Posterior vena cava (tissue), 2 donors: ENCODE measurements at regions of chrX and their contacts with region 1.

Region 1: DNA sequence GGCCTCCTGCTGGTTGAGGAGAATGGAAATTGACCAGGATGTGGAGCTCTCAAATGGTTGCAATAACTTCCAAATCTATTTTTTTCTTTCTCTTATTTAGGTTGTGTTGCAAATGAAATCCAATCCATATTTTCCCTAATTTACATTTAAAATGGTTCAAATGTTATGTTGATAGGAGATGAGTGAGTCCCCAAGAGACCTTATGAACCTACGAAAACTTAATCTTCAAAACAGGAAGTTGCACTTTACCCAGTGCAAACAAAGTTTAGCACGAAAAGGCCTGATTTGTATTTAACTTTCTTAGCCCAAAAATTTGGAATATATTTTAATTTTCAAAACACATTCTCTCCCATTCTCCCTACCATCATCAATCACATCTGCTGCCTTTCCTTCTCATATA is 59.3 kb upstream of the NDP start:
- DNase-seq: no peak

Region 2: DNA sequence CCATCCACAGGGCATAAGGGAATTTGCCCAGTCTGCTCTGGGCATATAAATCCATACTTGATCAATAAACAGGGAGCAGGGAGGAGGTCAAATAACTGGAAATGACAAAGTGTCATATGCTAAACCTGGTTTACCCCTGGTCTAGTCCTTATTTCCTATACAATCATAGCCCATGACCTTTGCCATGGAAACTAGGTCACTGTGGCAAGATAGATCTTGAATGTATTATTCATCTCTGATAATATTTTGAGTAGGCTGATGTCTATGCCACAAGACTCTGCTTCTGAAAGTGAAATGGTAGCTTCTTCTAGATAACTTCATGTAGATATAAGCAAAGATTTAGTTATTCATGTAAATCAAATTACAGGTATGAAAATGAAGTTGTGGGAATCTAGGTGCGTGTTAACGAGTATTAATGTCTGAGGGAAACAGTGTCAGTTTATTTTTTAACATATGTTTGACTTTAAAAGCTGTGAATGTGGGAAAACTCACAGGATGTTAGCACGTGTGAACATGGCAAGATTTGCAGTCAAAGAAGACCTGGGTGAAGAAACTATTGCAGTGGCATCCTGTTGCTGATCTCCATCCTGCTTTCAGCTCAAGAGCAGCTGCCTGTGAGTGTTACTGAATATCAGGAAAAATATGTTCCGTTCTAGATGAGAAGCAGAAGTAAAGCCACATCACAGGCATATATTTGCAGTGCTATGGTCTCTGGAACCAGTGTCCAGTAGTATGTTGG is 22.6 kb after region 1 on chrX:
- intact Hi-C with region 1: no loop called
- DNase-seq: no peak

Region 3: DNA sequence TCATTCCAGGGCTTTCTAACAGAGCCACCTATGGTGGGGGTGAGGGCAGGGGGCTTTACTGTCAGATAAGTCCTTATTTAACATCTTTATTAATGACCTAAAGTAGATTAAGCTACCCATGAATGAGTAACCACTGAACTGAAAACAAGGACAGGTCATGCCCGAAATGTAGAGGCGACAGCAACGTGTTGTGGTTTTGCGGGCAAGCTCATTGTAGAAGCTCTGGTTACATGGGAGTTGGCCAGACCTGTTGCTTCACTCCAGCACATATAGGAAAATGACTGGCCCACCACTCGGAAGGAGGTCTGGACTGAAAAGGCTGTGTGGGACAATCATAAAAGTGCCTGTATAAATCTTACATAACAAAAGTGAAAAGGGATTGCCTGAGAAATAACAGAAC is 50.4 kb after region 1 on chrX:
- intact Hi-C with region 1: no loop called
- DNase-seq: no peak

Region 4: GRCh38 chrX:45011131-45011530 is 978.7 kb after region 1 on chrX:
- intact Hi-C with region 1: loop called in 1 of 2 experiments (anchors 5 kb)
- DNase-seq: no peak

Region 5: DNA sequence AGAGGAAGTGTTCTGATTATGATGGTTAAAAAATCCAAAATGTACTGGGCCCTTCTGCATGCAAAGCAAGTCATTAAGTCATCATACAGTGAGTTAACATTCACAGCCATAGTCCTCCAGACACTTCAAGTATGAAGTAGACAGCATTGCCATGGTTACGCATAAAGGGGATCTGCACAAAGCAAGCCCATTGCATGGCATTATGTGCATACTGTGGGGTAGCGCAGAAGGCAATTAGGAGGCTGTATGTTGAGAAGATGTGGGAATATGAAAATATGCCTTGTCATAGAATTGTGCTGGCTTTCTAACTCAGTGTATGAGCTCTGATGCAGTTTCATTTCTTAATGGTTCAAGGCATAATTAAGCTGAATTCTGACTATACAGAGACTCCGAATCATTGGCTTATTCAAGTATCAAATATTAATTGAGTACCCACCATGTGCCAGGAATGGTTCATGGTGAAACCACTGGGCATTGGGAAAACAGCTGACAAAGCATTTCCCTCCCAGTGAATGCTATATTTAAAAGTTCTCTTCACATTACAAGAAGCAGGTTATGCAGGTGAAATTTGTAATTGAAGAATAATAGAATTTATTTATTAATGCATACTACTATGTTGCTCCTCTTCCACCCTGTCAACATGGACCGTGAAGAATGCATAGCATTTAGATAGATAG is 1923.8 kb after region 1 on chrX:
- intact Hi-C with region 1: loop called in 1 of 2 experiments (anchors 5 kb)
- DNase-seq: no peak